Activated T-helper 1 cell treated with anti-CD3 and anti-CD28 coated beads, Interleukin-12 subunit alpha, Interleukin-12 subunit beta, Interleukin-2, Interleukin-4 antibody, amounts not matched to agents 30 ng/mL and 10 ng/mL and 1 ng/mL, durations not matched to agents 14 hours and 24 hours and 36 hours (primary cell): ENCODE measurements at regions of chr1 and their contacts with region 1.

Region 1: GRCh38 chr1:160504666-160505065 is 18.4 kb downstream of the SLAMF6 start:
- DNase-seq: no peak
- H3K4me3 Mint-ChIP-seq: no peak overlapping the region
- H3K27ac Mint-ChIP-seq: no peak overlapping the region
- H3K4me1 Mint-ChIP-seq: peaks cover 17% of the 10 kb centered on the region
- H3K27me3 Mint-ChIP-seq: no peaks in the 10 kb centered on the region

Region 2: DNA sequence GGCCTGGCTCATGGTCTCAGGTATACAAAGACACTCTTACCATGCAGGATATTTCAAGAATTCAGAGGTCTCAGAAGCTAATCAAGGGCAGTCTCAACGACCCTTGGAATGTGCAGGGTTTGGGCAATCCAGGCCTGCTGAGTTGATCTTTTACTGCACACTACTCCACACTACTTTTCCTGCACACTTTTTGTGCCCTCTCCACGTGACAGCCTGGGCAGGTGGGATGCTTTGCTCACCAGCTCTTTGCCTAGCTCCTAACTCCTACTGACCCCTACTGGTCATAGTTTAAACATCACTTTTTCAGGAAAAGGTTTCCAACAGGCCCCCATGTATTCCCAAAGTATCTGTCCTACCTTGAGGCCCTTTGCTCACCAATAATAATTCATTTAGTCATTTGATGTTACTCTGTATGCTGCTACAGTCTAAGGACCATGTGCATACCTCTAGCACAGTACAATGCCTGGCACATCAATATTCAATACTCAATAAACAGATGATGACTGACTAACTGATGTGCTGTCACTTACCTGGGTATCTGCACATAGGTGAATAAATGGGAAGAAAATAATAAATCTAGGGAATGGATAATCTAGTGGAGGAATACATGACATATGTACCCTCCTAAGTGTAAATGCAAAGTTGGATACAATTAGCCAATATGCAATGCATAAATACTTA is 714.3 kb before region 1 on chr1:
- intact Hi-C with region 1: no loop called
- DNase-seq: no peak
- H3K4me3 Mint-ChIP-seq: no peak overlapping the region
- H3K27ac Mint-ChIP-seq: no peak overlapping the region
- H3K4me1 Mint-ChIP-seq: no peaks in the 10 kb centered on the region
- H3K27me3 Mint-ChIP-seq: peaks cover 13% of the 10 kb centered on the region

Region 3: GRCh38 chr1:160534823-160535605 is 30.3 kb after region 1 on chr1:
- intact Hi-C with region 1: loop called (anchors 2 kb)
- DNase-seq: no peak
- H3K4me3 Mint-ChIP-seq: no peak overlapping the region
- H3K27ac Mint-ChIP-seq: no peak overlapping the region
- H3K4me1 Mint-ChIP-seq: peaks cover 21% of the 10 kb centered on the region
- H3K27me3 Mint-ChIP-seq: no peaks in the 10 kb centered on the region